Naive thymus-derived CD8-positive, alpha-beta T cell (primary cell): ENCODE measurements at regions of chr2 and their contacts with region 1.

Region 1: DNA sequence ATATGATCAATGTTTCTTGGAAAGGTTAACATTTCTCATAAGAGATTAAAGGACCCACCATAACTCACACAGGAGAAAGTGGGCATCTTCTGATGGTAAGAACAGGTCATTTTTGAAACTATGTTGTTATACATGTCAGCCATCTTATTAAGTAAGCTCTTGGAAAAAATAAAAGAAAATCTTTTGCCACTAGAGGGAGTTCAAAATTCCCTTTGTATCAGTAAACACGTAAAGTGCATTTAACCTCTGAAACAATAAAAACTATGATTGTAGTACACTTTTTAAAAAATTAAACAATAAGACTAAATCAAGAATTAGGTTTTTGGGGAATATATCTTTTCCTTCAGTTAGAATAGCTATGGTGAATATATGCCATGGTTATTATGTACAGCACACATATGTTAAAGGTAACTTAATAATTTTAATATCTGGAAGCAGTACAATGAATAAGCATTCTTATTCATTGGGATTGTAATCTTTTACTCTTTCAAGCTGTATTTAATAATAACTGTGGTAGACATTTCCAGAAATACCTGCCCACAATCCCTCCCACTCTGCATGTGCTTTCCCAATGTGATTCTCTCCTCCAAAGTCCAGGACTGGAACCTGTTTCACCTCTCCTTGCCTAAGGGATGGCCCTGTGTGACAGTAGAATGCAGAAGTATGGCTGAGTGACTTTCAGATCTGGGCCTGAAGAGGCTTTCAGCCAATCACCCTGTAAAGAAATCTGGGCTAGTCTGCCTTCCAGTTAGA is 64.2 kb downstream of the RBMS1 start:
- DNase-seq: peak in 3 of 10 donors; percentile 61 to 64 (median 64)
- ATAC-seq: peak; percentile 33 to 42
- H3K4me3 Mint-ChIP-seq: peak overlapping the region in 6 of 10 donors; percentile 23 to 62 (median 37)
- H3K27ac Mint-ChIP-seq: peak overlapping the region; percentile 80 to 97 (median 88)
- H3K4me1 Mint-ChIP-seq: peaks cover 28 to 76% (median 63%) of the 10 kb centered on the region in 4 donors
- H3K27me3 Mint-ChIP-seq: no peaks in the 10 kb centered on the region

Region 2: GRCh38 chr2:160493227-160494028 is 64.0 kb after region 1 on chr2 and contains the start of gene RBMS1:
- POLR2A ChIA-PET with region 1: interaction called, 11 read pairs
- DNase-seq: peak; percentile 17 to 75 (median 52)
- ATAC-seq: peak; percentile 56 to 64
- H3K4me3 Mint-ChIP-seq: peak within 1 kb of the TSS; percentile 87 to 98 (median 95)
- H3K27ac Mint-ChIP-seq: peak within 1 kb of the TSS; percentile 90 to 99 (median 95)
- H3K4me1 Mint-ChIP-seq: peaks cover 19 to 37% (median 35%) of the 10 kb centered on the region in 4 donors
- H3K27me3 Mint-ChIP-seq: peaks cover 0 to 8% (median 0%) of the 10 kb centered on the region in 5 donors
- polyA plus RNA-seq, gene RBMS1: 80.0 to 125 (median 110) TPM